ENCODE measurements at regions of chr2 and their contacts with region 1.

Region 1: GRCh38 chr2:25881764-25882163 is 3.5 kb upstream of the ASXL2 start:
- DNase-seq: no peak
- H3K4me3 ChIP-seq: no peak overlapping the region
- H3K27ac ChIP-seq: no peak overlapping the region
- H3K4me1 ChIP-seq: peaks cover 1% of the 10 kb centered on the region
- H3K27me3 ChIP-seq: no peaks in the 10 kb centered on the region
- CTCF ChIP-seq: no peak
- EP300 ChIP-seq: no peak
- POLR2A ChIP-seq: no peak

Region 2: DNA sequence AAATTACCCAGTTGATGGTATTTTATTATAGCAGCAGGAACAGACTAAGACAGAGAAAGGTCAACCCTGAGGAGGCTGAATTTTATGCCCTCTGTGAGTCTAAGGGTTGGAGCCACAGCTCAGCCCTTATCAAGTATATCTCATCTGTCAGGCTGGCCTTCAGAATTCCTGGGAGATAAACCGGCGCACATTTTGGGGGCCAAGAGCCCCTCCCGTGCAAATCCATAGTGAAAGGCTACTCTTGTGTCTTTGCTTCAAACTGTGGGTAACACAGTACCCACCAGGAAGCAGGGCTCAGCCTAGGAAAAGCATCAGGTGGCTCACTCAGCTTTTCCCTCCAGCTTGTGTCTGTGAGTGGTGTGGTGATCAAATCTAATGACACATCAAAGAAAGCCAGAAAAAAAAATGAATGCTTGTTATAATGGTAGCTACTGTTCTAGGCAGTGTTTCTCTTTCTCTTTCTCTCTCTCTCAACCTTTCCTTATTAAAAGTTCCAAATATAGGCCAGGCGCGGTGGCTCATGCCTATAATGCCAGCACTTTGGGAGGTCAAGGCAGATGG is 21.5 kb after region 1 on chr2:
- intact Hi-C with region 1: loop called in 1 of 4 experiments (anchors 2 kb)
- DNase-seq: no peak
- H3K4me3 ChIP-seq: no peak overlapping the region
- H3K27ac ChIP-seq: no peak overlapping the region
- H3K4me1 ChIP-seq: no peaks in the 10 kb centered on the region
- H3K27me3 ChIP-seq: no peaks in the 10 kb centered on the region
- CTCF ChIP-seq: no peak
- EP300 ChIP-seq: no peak
- POLR2A ChIP-seq: no peak

Region 3: DNA sequence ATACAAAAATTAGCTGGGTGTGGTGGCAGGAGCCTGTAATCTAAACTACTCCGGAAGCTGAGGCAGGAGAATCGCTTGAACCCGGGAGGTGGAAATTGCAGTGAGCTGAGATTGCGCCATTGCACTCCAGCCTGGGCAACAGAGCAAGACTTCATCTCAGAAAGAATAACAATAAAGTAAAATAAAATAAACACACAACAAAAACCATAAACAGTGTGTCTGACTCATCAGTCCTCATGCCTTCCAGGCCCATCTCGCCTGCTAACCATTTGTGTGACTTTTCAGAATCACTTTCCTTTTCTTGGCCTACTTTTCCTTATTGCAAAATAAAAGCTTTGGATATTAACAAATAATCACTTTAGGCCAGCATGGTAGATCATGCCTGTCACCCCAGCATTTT is 38.6 kb after region 1 on chr2:
- intact Hi-C with region 1: no loop called
- DNase-seq: no peak
- H3K4me3 ChIP-seq: no peak overlapping the region
- H3K27ac ChIP-seq: no peak overlapping the region
- H3K4me1 ChIP-seq: no peaks in the 10 kb centered on the region
- H3K27me3 ChIP-seq: no peaks in the 10 kb centered on the region
- CTCF ChIP-seq: no peak
- EP300 ChIP-seq: no peak
- POLR2A ChIP-seq: no peak

Region 4: DNA sequence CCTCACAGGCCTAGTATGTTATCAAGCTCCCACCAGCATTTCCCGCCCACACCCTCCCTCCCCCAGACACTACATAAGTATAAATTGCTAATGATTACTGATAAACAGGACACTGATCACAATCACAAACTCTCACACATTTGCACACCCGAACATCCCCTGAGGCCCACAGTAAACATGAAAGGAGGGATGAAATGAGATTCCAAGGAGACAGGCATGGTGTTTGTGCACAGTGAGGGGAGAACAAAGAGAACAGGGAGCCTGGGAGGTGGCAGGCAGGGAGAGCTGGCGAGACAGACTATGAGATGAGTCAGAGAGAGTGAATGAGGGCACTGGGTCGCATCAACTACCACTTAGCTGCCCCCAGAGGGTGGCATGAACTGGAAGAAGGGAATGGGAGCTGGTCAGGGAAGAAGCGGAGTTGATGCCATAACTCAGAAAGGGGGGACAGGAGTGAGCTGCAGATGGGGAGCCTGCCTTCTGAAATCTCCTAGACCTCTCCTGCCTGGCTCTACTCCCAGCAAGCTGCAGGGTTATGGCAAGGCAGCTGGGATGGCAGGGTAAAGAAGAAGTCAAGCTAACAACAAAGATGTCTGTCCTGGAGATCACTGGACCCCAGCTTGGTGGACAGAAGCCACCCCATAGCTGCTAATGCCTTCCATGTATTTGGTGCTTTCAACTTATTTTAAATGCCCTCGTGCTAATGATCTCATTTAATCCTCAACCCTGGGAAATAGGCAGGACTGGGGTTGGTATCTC is 95.4 kb after region 1 on chr2:
- intact Hi-C with region 1: no loop called
- DNase-seq: no peak
- H3K4me3 ChIP-seq: no peak overlapping the region
- H3K27ac ChIP-seq: no peak overlapping the region
- H3K4me1 ChIP-seq: peaks cover 23% of the 10 kb centered on the region
- H3K27me3 ChIP-seq: no peaks in the 10 kb centered on the region
- CTCF ChIP-seq: no peak
- EP300 ChIP-seq: no peak
- POLR2A ChIP-seq: no peak

Measured in ovary (tissue), 10 donors.